Activated T-helper 1 cell treated with anti-CD3 and anti-CD28 coated beads, Interleukin-12 subunit alpha, Interleukin-12 subunit beta, Interleukin-2, Interleukin-4 antibody, amounts not matched to agents 30 ng/mL and 10 ng/mL and 1 ng/mL, durations not matched to agents 14 hours and 24 hours and 36 hours (primary cell): ENCODE measurements at regions of chr14 and their contacts with region 1.

Region 1: DNA sequence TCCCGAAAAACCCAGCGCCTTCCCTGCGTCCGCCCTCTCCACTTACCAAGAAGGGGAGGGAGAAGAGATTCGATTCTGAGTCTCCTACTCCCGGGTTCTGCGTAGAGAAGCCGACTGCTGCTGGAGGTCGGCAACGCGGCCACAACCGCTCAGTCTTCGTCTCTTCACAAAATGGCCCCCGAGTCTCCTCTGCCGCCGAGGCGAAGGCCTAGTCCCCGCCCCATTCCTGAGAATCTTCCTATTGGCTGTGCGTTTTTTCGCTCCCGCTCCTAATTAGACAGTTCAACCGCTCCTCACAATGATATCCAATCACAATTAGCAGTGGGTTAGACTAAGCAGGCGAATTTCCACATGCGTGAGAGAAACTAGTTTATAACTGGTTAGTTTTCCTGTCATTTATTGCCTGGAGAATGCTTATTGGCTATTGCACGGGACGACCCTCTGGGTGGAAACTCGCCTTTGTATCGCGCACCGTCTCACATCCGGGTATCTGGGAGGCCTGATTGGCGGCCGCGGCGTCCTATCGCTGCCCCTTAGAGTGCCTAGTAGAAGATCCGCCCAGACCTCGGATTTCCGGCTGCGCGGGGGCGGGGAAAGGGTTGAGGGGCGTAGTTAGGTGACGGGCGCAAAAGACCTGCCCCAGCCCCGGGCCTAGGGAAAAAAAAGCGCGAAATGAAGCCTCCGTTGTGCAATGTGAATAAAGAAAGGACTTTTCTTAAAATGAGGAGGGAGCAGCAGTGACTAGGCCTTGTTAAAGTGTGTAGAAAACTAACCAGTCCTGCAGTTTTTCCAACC is at the start of gene HNRNPC:
- DNase-seq: peak; percentile 100
- H3K4me3 Mint-ChIP-seq: peak within 1 kb of the TSS; percentile 99
- H3K27ac Mint-ChIP-seq: peak within 1 kb of the TSS; percentile 100
- H3K4me1 Mint-ChIP-seq: peaks cover 34% of the 10 kb centered on the region
- H3K27me3 Mint-ChIP-seq: no peaks in the 10 kb centered on the region
- total RNA-seq, gene HNRNPC: 958 and 976 TPM in 2 replicates

Region 2: GRCh38 chr14:20682435-20683124 is 586.9 kb before region 1 on chr14:
- intact Hi-C with region 1: loop called (anchors 2 kb)
- DNase-seq: peak; percentile 65
- H3K4me3 Mint-ChIP-seq: no peak overlapping the region
- H3K27ac Mint-ChIP-seq: no peak overlapping the region
- H3K4me1 Mint-ChIP-seq: peaks cover 10% of the 10 kb centered on the region
- H3K27me3 Mint-ChIP-seq: no peaks in the 10 kb centered on the region

Region 3: DNA sequence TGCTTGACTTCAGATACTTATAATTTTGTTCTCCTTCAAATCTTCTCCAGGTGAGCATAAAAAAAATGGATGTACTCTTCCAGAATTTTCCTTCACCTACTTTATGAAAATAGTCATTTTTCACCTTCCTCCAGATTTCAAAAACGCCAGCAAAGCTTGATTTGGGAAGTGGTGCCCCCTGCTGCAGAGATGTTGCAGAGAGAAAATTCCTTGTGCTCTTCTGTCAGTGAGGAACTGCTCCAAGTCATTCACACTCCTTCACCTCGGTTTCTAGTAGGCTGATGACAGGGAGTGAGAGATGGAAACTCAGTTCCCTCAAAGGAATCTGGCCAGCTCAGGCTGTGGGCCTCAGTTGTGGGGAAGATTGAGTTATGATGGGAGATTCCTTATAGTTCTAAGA is 402.5 kb before region 1 on chr14:
- intact Hi-C with region 1: no loop called
- DNase-seq: no peak
- H3K4me3 Mint-ChIP-seq: no peak overlapping the region
- H3K27ac Mint-ChIP-seq: no peak overlapping the region
- H3K4me1 Mint-ChIP-seq: no peaks in the 10 kb centered on the region
- H3K27me3 Mint-ChIP-seq: peaks cover 24% of the 10 kb centered on the region

Region 4: GRCh38 chr14:21072781-21073339 is 196.6 kb before region 1 on chr14:
- intact Hi-C with region 1: no loop called
- DNase-seq: no peak
- H3K4me3 Mint-ChIP-seq: no peak overlapping the region
- H3K27ac Mint-ChIP-seq: no peak overlapping the region
- H3K4me1 Mint-ChIP-seq: peaks cover 32% of the 10 kb centered on the region
- H3K27me3 Mint-ChIP-seq: peaks cover 50% of the 10 kb centered on the region

Region 5: DNA sequence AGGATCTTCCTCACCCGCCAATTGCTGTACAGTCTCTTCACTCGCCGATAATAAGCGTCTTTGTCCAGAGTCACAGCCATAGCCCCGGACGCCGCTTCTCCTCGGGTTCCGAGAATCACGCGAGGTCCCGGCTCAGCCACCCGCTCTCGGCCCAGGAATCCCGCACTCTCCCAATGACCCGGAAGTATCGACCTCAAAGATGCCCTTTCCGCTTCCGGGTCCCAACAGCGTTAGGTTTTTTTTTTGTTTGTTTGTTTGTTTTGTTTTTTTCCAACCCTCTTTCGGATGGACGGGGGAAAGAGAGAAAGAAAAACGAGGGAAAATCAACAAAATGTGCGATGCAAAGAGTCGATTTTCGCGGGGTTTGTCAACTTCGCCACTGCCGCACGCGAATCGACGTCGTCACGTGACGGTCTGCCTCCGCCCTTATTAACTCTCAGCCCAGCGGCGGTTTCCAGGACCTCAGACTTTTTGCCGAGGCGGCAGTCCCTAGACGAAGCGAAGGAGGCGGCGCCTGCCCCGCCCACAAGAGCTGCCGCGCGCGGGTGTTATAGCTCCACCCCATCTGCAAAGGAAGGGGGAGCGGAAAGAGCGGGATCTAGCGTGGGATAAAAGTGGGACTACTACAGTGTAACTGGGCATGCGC is 114.5 kb after region 1 on chr14 and contains the start of gene SUPT16H:
- intact Hi-C with region 1: loop called (anchors 1 kb)
- DNase-seq: peak; percentile 92
- H3K4me3 Mint-ChIP-seq: peak within 1 kb of the TSS; percentile 96
- H3K27ac Mint-ChIP-seq: peak within 1 kb of the TSS; percentile 100
- H3K4me1 Mint-ChIP-seq: peaks cover 40% of the 10 kb centered on the region
- H3K27me3 Mint-ChIP-seq: no peaks in the 10 kb centered on the region
- total RNA-seq, gene SUPT16H: 162 and 166 TPM in 2 replicates

Region 6: GRCh38 chr14:21455911-21456667 is 186.6 kb after region 1 on chr14 and contains the start of gene CHD8:
- intact Hi-C with region 1: loop called (anchors 1 kb)
- DNase-seq: peak; percentile 100
- H3K4me3 Mint-ChIP-seq: peak within 1 kb of the TSS; percentile 96
- H3K27ac Mint-ChIP-seq: peak within 1 kb of the TSS; percentile 95
- H3K4me1 Mint-ChIP-seq: peaks cover 40% of the 10 kb centered on the region
- H3K27me3 Mint-ChIP-seq: no peaks in the 10 kb centered on the region
- total RNA-seq, gene CHD8: 126 and 131 TPM in 2 replicates

Region 7: GRCh38 chr14:22536853-22537338 is 1267.4 kb after region 1 on chr14:
- intact Hi-C with region 1: loop called (anchors 5 kb)
- DNase-seq: peak; percentile 80
- H3K4me3 Mint-ChIP-seq: peak overlapping the region; percentile 88
- H3K27ac Mint-ChIP-seq: peak overlapping the region; percentile 94
- H3K4me1 Mint-ChIP-seq: peaks cover 95% of the 10 kb centered on the region
- H3K27me3 Mint-ChIP-seq: no peaks in the 10 kb centered on the region

Region 8: DNA sequence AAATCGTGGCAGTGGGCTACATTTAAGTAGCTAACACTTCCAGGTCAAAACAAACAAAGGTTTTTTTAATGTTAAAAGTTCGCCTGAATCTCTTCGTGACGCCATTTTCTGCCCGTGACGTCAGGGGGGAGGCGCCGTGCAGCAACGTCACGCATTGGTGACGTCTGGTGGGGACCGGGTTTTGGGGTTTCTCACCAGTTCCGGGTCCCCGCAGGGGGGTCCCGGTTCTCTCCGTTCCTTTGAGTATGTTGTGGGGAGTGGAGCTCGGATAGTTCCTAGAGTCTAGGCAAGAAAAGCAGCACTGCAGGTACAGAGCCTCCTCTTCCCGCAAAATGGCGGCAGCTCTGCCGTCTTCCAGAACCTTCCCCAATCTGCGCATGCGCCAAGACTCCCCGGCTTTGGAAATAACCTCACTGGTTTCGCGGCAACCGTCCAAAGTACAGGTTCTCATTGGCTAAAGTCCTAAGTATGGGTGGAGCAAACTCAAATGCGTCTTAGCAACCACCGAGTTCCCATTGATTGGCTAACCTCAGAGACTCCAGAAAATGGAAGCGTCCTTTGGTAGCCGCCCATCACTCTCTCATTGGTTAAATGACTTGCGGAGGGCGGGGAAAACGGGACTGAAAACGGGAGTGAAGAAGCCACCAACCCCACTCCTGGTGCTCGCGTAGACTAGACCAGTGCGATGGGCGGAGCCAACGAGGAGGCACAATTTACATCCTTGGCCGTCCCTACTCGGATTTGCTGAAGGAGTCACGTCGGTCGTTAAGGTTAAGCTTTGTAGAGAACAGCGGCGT is 1649.6 kb after region 1 on chr14 and contains the start of gene RBM23:
- intact Hi-C with region 1: loop called (anchors 2 kb)
- DNase-seq: peak; percentile 99
- H3K4me3 Mint-ChIP-seq: peak within 1 kb of the TSS; percentile 95
- H3K27ac Mint-ChIP-seq: peak within 1 kb of the TSS; percentile 100
- H3K4me1 Mint-ChIP-seq: peaks cover 54% of the 10 kb centered on the region
- H3K27me3 Mint-ChIP-seq: peaks cover 4% of the 10 kb centered on the region
- total RNA-seq, gene RBM23: 86.4 and 90.5 TPM in 2 replicates